ENCODE measurements at regions of chr12 and their contacts with region 1.

Region 1: DNA sequence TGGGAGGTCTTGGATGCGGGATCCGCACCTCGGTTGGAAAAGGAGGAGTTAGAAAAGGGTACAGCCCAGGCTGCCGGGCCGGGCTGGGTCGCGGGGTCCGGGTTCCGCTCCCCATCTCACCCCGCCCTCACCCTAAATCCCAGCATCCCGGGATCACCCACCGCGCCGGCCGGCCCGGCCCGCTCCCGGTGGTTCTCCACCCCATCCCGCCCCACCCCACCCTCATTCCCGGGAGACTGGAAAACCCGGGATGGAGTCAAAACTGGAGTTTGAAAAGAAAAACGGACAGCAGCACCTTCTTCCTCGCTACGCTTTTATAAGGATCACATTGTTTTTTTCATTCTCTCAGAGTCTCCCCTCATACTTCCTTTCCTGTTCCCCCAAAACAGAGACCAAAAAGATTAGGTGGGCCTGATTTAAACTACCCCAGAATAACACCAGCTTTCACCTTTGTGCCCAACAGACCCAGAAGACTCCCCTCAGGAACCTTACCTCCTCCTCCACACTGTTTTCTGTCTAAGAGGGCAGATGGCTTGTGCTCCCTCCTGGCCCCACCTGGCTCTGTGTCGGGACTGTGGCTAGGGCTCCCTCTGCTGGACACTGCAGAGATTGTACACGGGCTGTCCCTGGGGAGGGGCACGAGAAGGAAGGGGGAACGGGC is 2.8 kb downstream of the GLI1 start:
- DNase-seq: peak; percentile 82 to 94 (median 86)
- ATAC-seq: peak; percentile 71
- H3K4me3 ChIP-seq: peak overlapping the region; percentile 52
- H3K4me3 Mint-ChIP-seq: peak overlapping the region; percentile 94
- H3K27ac ChIP-seq: no peak overlapping the region
- H3K27ac Mint-ChIP-seq: peak overlapping the region; percentile 62
- H3K4me1 ChIP-seq: peaks cover 52% of the 10 kb centered on the region
- H3K4me1 Mint-ChIP-seq: peaks cover 55% of the 10 kb centered on the region
- H3K27me3 ChIP-seq: peaks cover 9 to 14% of the 10 kb centered on the region in 2 experiments
- H3K27me3 Mint-ChIP-seq: peaks cover 26% of the 10 kb centered on the region
- CTCF ChIP-seq: peak; percentile 92

Region 2: GRCh38 chr12:57213058-57213715 is 249.2 kb before region 1 on chr12:
- CTCF ChIA-PET with region 1: no interaction called
- POLR2A ChIA-PET with region 1: no interaction called
- intact Hi-C with region 1: loop called in 1 of 2 experiments (anchors 1 kb)
- DNase-seq: peak; percentile 72 to 92 (median 81)
- ATAC-seq: peak; percentile 75
- H3K4me3 ChIP-seq: no peak overlapping the region
- H3K4me3 Mint-ChIP-seq: peak overlapping the region; percentile 72
- H3K27ac ChIP-seq: no peak overlapping the region
- H3K27ac Mint-ChIP-seq: no peak overlapping the region
- H3K4me1 ChIP-seq: peaks cover 51% of the 10 kb centered on the region
- H3K4me1 Mint-ChIP-seq: peaks cover 42% of the 10 kb centered on the region
- H3K27me3 ChIP-seq: peaks cover 39 to 44% of the 10 kb centered on the region in 2 experiments
- H3K27me3 Mint-ChIP-seq: peaks cover 43% of the 10 kb centered on the region
- CTCF ChIP-seq: peak; percentile 94

Region 3: DNA sequence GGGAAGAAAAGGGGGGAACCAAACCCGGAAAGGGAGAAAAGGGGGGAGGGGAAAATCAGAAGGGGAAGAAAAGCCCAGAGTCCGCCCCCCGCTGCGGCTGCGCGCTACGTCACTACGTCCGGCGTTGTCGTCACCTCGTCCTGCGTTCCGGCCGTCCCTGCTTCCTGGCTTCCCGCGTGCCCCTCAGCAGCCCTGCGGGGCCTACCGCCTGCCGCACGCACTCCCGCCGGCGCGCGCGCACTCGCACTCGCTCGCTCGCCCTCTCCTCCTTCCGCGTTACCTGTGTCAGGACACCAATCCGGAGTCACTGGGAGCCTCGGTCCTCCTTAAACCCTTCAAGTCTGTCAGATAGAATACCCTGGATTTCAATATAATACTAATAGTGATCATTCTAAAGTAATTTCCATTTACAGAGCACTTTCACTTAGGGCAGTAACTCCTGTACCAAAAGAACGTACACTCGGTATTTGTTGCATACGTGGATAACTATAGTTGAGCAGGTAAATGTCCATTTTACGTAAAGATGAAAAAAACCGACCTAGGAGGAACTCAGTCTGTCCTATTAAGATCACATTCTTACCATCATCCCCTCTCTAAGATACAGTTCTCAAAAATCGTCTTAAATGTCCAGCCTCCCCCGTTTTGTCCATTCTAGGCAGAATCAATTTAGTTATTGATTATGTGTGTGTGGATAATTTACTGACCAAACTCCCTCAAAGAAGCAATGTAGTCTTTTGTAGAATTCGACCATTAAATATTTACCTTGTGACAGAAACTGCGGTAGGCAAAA is 31.3 kb before region 1 on chr12 and contains the start of gene R3HDM2:
- CTCF ChIA-PET with region 1: interaction called, 6 read pairs
- POLR2A ChIA-PET with region 1: interaction called, 10 read pairs
- intact Hi-C with region 1: loop called in 1 of 2 experiments (anchors 2 kb)
- DNase-seq: peak; percentile 88 to 98 (median 95)
- ATAC-seq: peak; percentile 92
- H3K4me3 ChIP-seq: peak within 1 kb of the TSS; percentile 70
- H3K4me3 Mint-ChIP-seq: peak within 1 kb of the TSS; percentile 99
- H3K27ac ChIP-seq: peak within 1 kb of the TSS; percentile 82 to 94
- H3K27ac Mint-ChIP-seq: peak within 1 kb of the TSS; percentile 99
- H3K4me1 ChIP-seq: peaks cover 29% of the 10 kb centered on the region
- H3K4me1 Mint-ChIP-seq: peaks cover 41% of the 10 kb centered on the region
- H3K27me3 ChIP-seq: no peaks in the 10 kb centered on the region
- H3K27me3 Mint-ChIP-seq: no peaks in the 10 kb centered on the region
- CTCF ChIP-seq: no peak
- total RNA-seq, gene R3HDM2: 106 to 115 TPM

Region 4: DNA sequence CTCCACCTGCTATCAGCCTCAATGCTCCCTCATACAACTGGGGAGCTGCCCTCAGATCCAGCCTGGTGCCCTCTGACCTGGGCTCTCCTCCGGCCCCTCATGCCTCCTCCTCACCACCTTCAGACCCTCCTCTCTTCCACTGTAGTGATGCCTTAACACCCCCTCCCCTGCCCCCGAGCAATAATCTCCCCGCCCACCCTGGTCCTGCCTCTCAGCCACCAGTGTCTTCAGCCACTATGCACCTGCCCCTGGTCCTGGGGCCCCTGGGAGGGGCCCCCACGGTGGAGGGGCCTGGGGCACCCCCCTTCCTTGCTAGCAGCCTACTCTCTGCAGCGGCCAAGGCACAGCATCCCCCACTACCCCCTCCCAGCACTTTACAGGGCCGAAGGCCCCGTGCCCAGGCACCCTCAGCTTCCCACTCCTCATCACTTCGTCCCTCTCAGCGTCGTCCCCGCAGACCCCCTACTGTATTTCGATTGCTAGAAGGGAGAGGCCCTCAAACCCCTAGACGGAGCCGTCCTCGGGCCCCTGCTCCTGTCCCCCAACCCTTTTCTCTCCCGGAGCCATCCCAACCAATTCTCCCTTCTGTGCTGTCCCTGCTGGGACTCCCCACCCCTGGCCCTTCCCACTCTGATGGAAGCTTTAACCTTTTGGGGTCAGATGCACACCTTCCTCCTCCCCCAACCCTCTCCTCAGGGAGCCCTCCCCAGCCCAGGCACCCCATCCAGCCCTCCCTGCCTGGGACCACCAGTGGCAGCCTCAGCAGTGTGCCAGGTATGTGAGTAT is 63.4 kb after region 1 on chr12:
- CTCF ChIA-PET with region 1: interaction called, 3 read pairs
- POLR2A ChIA-PET with region 1: interaction called, 9 read pairs
- intact Hi-C with region 1: loop called in 1 of 2 experiments (anchors 2 kb)
- DNase-seq: no peak
- ATAC-seq: no peak
- H3K4me3 ChIP-seq: no peak overlapping the region
- H3K4me3 Mint-ChIP-seq: no peak overlapping the region
- H3K27ac ChIP-seq: no peak overlapping the region
- H3K27ac Mint-ChIP-seq: no peak overlapping the region
- H3K4me1 ChIP-seq: peaks cover 52% of the 10 kb centered on the region
- H3K4me1 Mint-ChIP-seq: peaks cover 32% of the 10 kb centered on the region
- H3K27me3 ChIP-seq: no peaks in the 10 kb centered on the region
- H3K27me3 Mint-ChIP-seq: no peaks in the 10 kb centered on the region
- CTCF ChIP-seq: no peak

Region 5: DNA sequence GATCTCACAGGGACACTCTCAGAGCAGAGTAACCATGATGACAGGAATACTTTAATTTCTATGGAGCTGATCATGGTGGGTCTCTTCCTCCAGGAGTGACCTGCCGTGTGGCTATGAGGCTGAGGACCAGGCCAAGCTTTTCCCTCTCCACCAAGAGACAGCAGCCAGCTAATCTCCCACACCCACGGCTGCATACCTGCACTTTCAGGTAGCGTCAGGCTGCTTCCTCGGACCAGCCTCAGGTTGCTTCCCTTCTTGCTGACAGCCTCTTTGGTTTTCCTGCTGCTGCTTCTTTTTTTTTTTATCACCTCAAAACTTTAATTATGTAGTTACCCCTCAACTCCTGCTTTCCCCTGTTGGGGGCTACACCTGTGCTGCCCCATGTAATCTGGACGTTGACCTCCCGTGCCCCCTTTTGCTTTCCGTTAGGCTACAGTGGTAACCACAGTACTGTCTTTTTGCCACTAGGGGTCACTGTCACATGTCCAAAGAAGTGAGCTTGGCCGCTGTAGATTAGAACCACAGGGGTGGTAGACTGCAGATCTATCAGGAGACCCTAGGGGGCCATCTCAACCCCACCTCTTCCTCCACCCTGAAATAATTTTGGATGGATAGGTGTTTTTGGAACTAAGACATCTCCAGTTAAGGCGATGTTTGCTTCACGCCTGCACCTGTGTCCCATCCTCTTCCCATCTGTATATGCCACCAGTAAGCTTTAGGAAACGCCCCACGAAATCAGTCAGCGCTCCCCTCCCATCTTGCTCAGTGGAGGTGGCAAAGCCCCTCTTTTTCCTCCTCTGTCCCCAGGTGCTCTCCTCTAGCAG is 120.8 kb after region 1 on chr12:
- CTCF ChIA-PET with region 1: interaction called, 12 read pairs
- POLR2A ChIA-PET with region 1: no interaction called
- intact Hi-C with region 1: loop called in 1 of 2 experiments (anchors 1 kb)
- DNase-seq: peak; percentile 33 to 89 (median 56)
- ATAC-seq: peak; percentile 100
- H3K4me3 ChIP-seq: no peak overlapping the region
- H3K4me3 Mint-ChIP-seq: no peak overlapping the region
- H3K27ac ChIP-seq: no peak overlapping the region
- H3K27ac Mint-ChIP-seq: no peak overlapping the region
- H3K4me1 ChIP-seq: peaks cover 8% of the 10 kb centered on the region
- H3K4me1 Mint-ChIP-seq: no peaks in the 10 kb centered on the region
- H3K27me3 ChIP-seq: peaks cover 0 to 10% of the 10 kb centered on the region in 2 experiments
- H3K27me3 Mint-ChIP-seq: peaks cover 15% of the 10 kb centered on the region
- CTCF ChIP-seq: peak; percentile 96